ENCODE measurements at regions of chr3 and their contacts with region 1.

Region 1: DNA sequence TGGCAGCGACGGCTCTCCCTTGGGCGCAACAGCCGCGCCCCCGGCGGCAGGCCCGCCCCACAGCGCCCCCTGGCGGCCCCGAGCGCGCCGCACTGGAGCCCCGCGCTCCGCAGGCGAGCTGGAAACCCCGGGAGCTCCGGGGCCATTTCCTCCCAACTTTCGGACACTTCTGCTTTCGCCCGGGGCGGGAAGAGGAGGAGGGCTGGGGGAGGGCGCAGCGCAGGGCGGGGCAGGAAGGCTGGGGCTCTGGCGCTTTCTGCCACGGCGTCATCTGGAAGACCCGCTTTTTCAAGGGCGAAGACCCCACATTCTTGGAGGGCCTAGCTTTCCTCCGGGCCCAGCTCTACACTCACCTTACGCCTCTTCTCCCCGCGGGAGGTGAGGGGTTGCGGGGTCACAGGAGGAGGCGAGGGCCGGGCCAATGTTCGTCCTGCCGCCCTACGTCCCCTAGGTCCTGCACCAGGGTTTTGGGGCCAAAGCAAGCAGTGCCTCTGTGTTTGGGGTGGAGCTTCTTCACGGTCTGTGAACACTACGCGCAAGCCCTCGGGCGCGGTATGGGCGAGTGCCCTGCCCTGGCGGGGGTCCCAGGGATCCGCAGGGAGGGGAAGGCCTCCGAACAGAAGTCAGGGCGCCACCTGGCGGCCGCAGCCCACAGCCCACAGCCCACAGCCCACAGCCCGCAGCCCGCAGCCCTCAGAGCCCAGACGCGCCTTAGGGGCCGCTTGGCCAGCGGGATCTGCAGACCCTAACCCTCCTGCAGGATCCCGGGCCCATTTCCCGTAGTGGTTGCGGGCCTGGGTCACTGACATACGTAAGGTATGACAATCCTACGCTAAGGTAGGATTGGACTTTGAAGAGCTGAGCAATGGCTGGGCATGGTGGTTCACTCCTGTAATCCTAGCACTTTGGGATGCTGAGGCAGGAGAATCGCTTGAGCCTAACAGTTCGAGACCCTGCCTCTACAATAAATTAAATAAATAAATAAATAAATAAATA is 31.1 kb downstream of the FOXL2 start:
- DNase-seq: no peak
- H3K4me3 ChIP-seq: peak overlapping the region; percentile 73
- H3K27me3 ChIP-seq: peaks cover 2% of the 10 kb centered on the region; the same call in 1 of the 2 replicates
- CTCF ChIP-seq: peak; percentile 91

Region 2: GRCh38 chr3:138408751-138409161 is 507.0 kb before region 1 on chr3:
- CTCF ChIA-PET with region 1: interaction called, 78 read pairs
- POLR2A ChIA-PET with region 1: no interaction called
- DNase-seq: no peak
- H3K4me3 ChIP-seq: no peak overlapping the region
- H3K27me3 ChIP-seq: no peaks in the 10 kb centered on the region
- CTCF ChIP-seq: no peak

Region 3: GRCh38 chr3:138594150-138594934 is 321.5 kb before region 1 on chr3 and contains the start of gene CEP70:
- CTCF ChIA-PET with region 1: interaction called, 291 read pairs
- POLR2A ChIA-PET with region 1: interaction called, 6 read pairs
- DNase-seq: peak; percentile 53
- H3K4me3 ChIP-seq: peak within 1 kb of the TSS; percentile 62
- H3K27me3 ChIP-seq: no peaks in the 10 kb centered on the region
- CTCF ChIP-seq: peak; percentile 65
- polyA plus RNA-seq, gene CEP70: 3.6 and 8.8 TPM in 2 replicates

Region 4: DNA sequence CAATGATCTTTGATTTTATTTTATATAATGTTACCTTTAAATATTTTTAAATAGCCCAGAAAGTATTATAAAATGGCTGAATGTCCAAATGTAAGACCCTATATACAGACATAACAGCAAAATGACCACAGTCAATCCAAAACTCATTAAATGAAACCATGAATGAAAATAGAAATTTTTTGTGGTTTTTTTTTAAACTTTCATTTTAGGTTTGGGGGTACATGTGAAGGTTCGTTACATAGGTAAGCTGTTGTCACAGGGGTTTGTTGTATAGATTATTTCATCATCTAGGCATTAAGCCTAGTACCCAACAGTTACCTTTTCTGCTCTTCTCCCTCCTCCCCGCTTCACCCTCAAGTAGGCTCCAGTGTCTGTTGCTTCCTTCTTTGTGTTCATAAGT is 198.5 kb before region 1 on chr3:
- CTCF ChIA-PET with region 1: interaction called, 14 read pairs
- POLR2A ChIA-PET with region 1: no interaction called
- DNase-seq: no peak
- H3K4me3 ChIP-seq: no peak overlapping the region
- H3K27me3 ChIP-seq: no peaks in the 10 kb centered on the region
- CTCF ChIP-seq: no peak

Region 5: DNA sequence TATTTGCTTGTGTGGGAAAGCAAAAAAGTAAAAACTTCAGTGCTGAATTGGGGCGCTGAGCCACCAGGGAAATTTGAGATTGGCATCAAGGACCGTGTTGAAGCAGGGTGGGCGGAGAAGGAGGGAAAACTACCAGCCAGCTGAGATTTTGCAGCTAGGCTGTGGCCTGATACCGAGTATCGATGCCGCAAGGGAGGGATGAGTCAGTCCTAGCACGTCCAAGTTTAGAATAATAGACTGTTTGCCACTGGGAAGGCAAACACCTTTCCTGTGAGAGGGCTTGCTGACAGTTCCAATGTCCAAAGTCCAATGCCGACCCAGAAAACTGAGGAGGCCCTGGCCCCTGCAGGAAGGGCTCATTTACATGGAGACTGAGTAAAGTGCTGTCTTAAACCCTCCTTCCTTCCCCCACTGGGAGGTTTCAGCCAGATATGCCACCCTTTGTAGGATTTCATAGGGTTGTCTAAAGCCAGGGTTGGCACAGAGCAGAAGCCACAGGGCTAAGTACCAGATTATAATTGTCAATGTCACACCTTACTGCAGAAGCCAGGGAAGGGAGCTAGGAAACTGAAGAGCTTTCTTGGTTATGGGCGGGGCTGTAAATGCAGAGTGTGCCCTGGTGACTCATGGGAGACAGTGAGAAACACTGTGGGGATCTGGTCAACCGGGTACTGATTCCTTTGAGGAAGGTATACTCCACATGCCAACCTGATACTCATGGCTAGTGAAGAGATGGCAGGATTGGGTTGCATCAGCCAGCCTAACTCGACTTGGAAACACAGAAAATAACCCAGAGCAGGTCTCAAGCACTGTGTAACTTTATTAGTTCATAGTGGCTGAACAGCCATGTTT is 52.7 kb before region 1 on chr3:
- CTCF ChIA-PET with region 1: interaction called, 12 read pairs
- POLR2A ChIA-PET with region 1: no interaction called
- DNase-seq: no peak
- H3K4me3 ChIP-seq: no peak overlapping the region
- H3K27me3 ChIP-seq: no peaks in the 10 kb centered on the region
- CTCF ChIP-seq: no peak

Region 6: GRCh38 chr3:138935848-138936740 is 20.3 kb after region 1 on chr3:
- CTCF ChIA-PET with region 1: interaction called, 185 read pairs
- POLR2A ChIA-PET with region 1: no interaction called
- DNase-seq: no peak
- H3K4me3 ChIP-seq: peak overlapping the region; percentile 28
- H3K27me3 ChIP-seq: peaks cover 53% of the 10 kb centered on the region
- CTCF ChIP-seq: peak; percentile 93

Region 7: DNA sequence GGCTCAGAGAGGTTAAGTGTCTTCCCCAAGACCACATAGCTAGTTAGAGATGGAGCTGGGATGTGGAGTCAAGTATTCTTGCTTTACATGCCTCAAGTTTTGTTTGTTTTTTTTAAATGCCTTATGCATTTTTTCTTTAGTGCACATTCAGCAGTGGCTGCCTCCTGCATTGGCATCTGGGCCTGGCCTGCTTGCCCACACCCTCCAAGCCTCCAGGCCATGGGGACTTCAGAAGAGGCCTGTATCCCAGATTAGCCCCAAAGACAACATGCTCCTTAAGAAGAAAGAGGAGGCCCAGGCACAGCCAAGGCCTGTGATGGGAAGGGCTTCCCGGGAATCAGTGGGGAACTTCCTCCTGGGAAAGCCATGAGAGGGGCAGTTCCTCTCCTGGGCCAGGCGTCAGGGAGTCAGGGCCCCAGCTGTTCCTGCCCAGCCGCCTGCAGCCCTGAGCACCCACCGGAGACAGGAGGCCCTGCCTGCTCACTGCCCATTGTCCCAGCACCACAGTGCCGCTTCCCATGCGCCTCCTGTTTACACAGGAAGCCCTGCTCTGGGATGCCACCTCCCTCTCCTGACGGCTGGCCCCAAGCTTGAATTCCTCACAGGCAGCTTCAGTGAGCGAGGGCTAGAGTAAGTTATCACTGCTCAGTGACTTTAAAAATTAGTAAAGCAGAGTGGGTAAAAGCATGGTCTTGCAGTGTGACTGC is 47.2 kb after region 1 on chr3:
- CTCF ChIA-PET with region 1: no interaction called
- POLR2A ChIA-PET with region 1: no interaction called
- DNase-seq: no peak
- H3K4me3 ChIP-seq: no peak overlapping the region
- H3K27me3 ChIP-seq: peaks cover 13% of the 10 kb centered on the region
- CTCF ChIP-seq: no peak

Region 8: GRCh38 chr3:140219923-140220452 is 1304.2 kb after region 1 on chr3:
- CTCF ChIA-PET with region 1: no interaction called
- POLR2A ChIA-PET with region 1: no interaction called
- DNase-seq: no peak
- H3K4me3 ChIP-seq: no peak overlapping the region
- H3K27me3 ChIP-seq: no peaks in the 10 kb centered on the region
- CTCF ChIP-seq: no peak

Measured in BJ (cell line).